ENCODE measurements at regions of chr17 and their contacts with region 1.

Region 1: GRCh38 chr17:39080421-39081078 is 70.9 kb downstream of the PLXDC1 start:
- DNase-seq: peak in 1 of 2 donors; percentile 41
- H3K4me3 ChIP-seq: no peak overlapping the region
- CTCF ChIP-seq: no peak
- POLR2A ChIP-seq: no peak

Region 2: DNA sequence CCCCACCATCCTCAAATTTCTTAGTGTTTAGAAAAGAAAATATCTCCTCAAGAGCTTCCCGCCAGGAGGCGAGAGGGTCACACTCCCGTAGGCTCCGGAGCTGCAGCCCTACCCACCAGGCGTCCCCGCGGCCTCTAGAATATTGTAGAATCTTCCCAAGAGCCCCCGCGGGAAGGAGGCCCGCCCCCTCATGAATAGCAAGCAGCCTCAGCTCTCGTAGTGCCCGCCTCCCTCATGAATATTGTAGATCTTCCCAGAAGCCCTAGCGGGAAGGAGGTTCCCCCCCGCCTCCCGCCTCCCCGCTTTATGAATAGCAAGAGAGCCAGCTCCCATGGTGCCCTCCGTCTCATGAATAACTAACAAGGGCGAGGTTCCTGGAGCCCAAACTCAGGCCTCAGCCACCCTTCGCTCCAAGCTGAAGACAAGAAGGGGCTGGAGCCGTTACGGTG is 113.2 kb before region 1 on chr17 and contains the start of gene FBXO47:
- intact Hi-C with region 1: no loop called
- DNase-seq: peak; percentile 91 to 97
- H3K4me3 ChIP-seq: no peak within 1 kb of the TSS
- CTCF ChIP-seq: no peak
- POLR2A ChIP-seq: no peak
- total RNA-seq, gene FBXO47: not detected

Region 3: DNA sequence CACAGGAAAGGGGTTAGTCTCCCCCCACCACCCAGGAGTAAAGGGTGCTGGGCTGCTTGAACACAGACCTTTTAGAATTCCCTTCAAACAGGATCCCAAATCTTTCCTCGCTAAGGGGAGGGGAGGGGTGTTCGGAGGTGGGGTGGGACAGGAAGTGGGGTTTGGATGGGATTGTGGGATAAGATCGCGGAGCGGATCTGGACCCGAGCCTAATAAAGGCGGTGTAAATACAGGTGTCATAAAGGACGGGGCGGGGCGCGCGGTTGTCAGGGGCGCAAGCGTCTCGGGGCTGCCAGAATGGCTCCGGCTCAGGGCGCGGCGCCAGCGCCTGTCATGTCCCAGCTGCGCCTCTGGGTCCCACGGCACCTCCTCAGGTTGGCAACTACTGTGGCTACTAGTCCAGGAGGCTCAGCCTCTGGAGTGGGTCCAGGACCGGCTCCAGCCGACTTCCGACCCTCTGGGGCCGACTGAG is 53.5 kb before region 1 on chr17:
- intact Hi-C with region 1: no loop called
- DNase-seq: peak; percentile 69 to 91
- H3K4me3 ChIP-seq: no peak overlapping the region
- CTCF ChIP-seq: no peak
- POLR2A ChIP-seq: no peak

Region 4: GRCh38 chr17:39132192-39132610 is 51.7 kb after region 1 on chr17:
- intact Hi-C with region 1: loop called (anchors 10 kb)
- DNase-seq: no peak
- H3K4me3 ChIP-seq: no peak overlapping the region
- CTCF ChIP-seq: no peak
- POLR2A ChIP-seq: no peak